Colonic mucosa (tissue), 4 donors: ENCODE measurements at regions of chr2 and their contacts with region 1.

Region 1: GRCh38 chr2:108583903-108584520 is 49.7 kb downstream of the LIMS1 start:
- DNase-seq: peak; percentile 77
- H3K4me3 ChIP-seq: no peak overlapping the region
- H3K27ac ChIP-seq: no peak overlapping the region
- H3K4me1 ChIP-seq: peaks cover 5% of the 10 kb centered on the region
- H3K27me3 ChIP-seq: no peaks in the 10 kb centered on the region
- CTCF ChIP-seq: peak; percentile 71

Region 2: GRCh38 chr2:107235491-107236244 is 1348.3 kb before region 1 on chr2:
- intact Hi-C with region 1: no loop called
- DNase-seq: no peak
- H3K4me3 ChIP-seq: no peak overlapping the region
- H3K27ac ChIP-seq: no peak overlapping the region
- H3K4me1 ChIP-seq: no peaks in the 10 kb centered on the region
- H3K27me3 ChIP-seq: no peaks in the 10 kb centered on the region
- CTCF ChIP-seq: no peak

Region 3: GRCh38 chr2:108215794-108216211 is 368.2 kb before region 1 on chr2:
- intact Hi-C with region 1: loop called (anchors 5 kb)
- DNase-seq: peak; percentile 59
- H3K4me3 ChIP-seq: no peak overlapping the region
- H3K27ac ChIP-seq: no peak overlapping the region
- H3K4me1 ChIP-seq: peaks cover 4% of the 10 kb centered on the region
- H3K27me3 ChIP-seq: no peaks in the 10 kb centered on the region
- CTCF ChIP-seq: peak; percentile 37

Region 4: GRCh38 chr2:108351889-108352288 is 232.1 kb before region 1 on chr2:
- intact Hi-C with region 1: loop called (anchors 5 kb)
- DNase-seq: no peak
- H3K4me3 ChIP-seq: no peak overlapping the region
- H3K27ac ChIP-seq: no peak overlapping the region
- H3K4me1 ChIP-seq: no peaks in the 10 kb centered on the region
- H3K27me3 ChIP-seq: no peaks in the 10 kb centered on the region
- CTCF ChIP-seq: no peak

Region 5: GRCh38 chr2:108396845-108397244 is 187.2 kb before region 1 on chr2:
- intact Hi-C with region 1: no loop called
- DNase-seq: no peak
- H3K4me3 ChIP-seq: no peak overlapping the region
- H3K27ac ChIP-seq: no peak overlapping the region
- H3K4me1 ChIP-seq: no peaks in the 10 kb centered on the region
- H3K27me3 ChIP-seq: no peaks in the 10 kb centered on the region
- CTCF ChIP-seq: no peak

Region 6: GRCh38 chr2:108417255-108417654 is 166.8 kb before region 1 on chr2:
- intact Hi-C with region 1: loop called (anchors 10 kb)
- DNase-seq: no peak
- H3K4me3 ChIP-seq: no peak overlapping the region
- H3K27ac ChIP-seq: no peak overlapping the region
- H3K4me1 ChIP-seq: no peaks in the 10 kb centered on the region
- H3K27me3 ChIP-seq: no peaks in the 10 kb centered on the region
- CTCF ChIP-seq: peak; percentile 28

Region 7: GRCh38 chr2:108637304-108637669 is 53.3 kb after region 1 on chr2:
- intact Hi-C with region 1: loop called (anchors 5 kb)
- DNase-seq: peak; percentile 18
- H3K4me3 ChIP-seq: no peak overlapping the region
- H3K27ac ChIP-seq: no peak overlapping the region
- H3K4me1 ChIP-seq: peaks cover 8% of the 10 kb centered on the region
- H3K27me3 ChIP-seq: no peaks in the 10 kb centered on the region
- CTCF ChIP-seq: no peak